ENCODE measurements at regions of chr12 and their contacts with region 1.

Region 1: GRCh38 chr12:113086249-113087164 is 30.0 kb downstream of the DTX1 start:
- DNase-seq: peak; percentile 42
- ATAC-seq: no peak
- H3K4me3 Mint-ChIP-seq: peak overlapping the region; percentile 23
- H3K27ac Mint-ChIP-seq: peak overlapping the region; percentile 85
- H3K4me1 Mint-ChIP-seq: peaks cover 73% of the 10 kb centered on the region
- H3K27me3 Mint-ChIP-seq: no peaks in the 10 kb centered on the region

Region 2: DNA sequence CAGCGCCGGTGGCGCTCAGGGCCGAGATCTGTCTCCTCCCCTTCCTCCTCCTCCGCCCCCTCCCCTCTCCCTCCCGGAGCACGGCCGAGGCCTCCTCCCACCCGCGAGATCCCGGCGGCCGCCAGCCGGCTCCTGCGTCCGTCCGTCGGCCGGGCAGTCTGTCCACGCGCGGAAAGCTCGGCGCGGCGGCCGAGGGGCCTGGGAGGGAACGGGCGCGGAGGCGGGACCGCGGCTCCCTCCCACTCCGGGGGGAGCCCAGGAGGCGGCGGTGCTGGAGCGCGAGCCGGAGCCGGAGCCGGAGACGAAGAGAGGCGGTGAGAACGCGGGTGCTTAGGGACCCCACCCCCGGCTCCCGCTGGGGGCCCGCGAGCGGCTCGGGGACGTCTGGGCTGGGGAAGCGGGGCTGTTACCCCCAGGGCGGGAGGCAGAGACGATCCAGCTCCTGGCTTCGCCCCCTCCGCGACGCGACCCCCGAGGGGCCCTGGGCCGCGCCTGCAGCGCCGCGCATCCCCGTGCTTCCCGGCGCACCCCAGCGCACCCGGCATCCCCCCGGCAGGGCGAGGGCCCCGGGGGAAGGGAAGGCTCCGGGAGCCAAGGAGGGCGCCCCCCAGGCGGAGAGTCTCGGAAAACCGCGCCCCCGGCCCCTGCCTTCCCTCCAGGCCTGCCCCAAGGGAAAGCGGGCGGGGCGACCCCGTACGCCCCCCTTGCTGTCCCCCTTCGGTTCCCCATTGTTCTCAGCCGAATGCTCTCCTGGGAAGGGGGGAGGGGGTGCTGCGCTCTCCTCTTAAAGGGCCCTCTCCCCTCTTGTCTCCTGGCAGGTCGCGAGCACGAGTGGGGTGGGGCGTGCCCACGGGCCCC is 29.6 kb before region 1 on chr12 and contains the start of gene DTX1:
- CTCF ChIA-PET with region 1: interaction called, 3 read pairs
- POLR2A ChIA-PET with region 1: no interaction called
- intact Hi-C with region 1: loop called (anchors 2 kb)
- DNase-seq: peak; percentile 63
- ATAC-seq: peak; percentile 57
- H3K4me3 Mint-ChIP-seq: peak within 1 kb of the TSS; percentile 74
- H3K27ac Mint-ChIP-seq: peak within 1 kb of the TSS; percentile 74
- H3K4me1 Mint-ChIP-seq: peaks cover 35% of the 10 kb centered on the region
- H3K27me3 Mint-ChIP-seq: no peaks in the 10 kb centered on the region
- total RNA-seq, gene DTX1: 12.0 to 12.9 TPM

Region 3: DNA sequence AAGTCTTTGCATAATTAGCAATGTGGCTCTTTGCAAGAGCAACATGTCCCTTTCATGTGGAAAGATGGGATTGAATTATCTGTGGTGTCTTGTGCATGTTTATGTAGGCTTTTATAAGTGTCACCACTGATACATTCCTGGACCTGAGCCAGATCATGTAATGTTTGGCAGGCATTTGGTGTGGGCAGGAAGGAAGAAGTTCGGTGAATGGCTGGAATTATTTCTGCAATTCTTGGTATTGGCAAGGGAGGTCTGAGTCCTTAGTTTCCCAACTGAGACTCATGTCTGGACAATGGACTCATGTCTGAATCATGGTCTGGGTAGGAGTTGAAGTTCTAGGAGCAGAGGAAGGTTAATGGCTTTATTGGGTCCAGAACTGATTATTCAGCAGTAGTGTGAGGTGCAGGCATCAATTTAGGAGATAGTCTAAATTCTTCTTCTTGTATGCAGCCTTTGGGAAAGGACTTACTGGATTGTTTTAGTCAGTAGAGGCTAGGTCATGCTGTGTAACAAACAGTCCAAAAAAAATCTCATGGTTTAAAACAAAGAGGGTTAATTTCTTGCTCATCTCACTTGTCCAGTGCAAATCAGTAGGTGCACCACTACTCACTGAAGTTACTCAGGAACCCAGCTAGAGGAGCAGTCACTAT is 571.6 kb after region 1 on chr12:
- CTCF ChIA-PET with region 1: no interaction called
- POLR2A ChIA-PET with region 1: no interaction called
- intact Hi-C with region 1: no loop called
- DNase-seq: no peak
- ATAC-seq: no peak
- H3K4me3 Mint-ChIP-seq: no peak overlapping the region
- H3K27ac Mint-ChIP-seq: no peak overlapping the region
- H3K4me1 Mint-ChIP-seq: no peaks in the 10 kb centered on the region
- H3K27me3 Mint-ChIP-seq: peaks cover 3% of the 10 kb centered on the region

Region 4: GRCh38 chr12:114063435-114063834 is 976.9 kb after region 1 on chr12:
- CTCF ChIA-PET with region 1: no interaction called
- POLR2A ChIA-PET with region 1: no interaction called
- intact Hi-C with region 1: no loop called
- DNase-seq: no peak
- ATAC-seq: no peak
- H3K4me3 Mint-ChIP-seq: no peak overlapping the region
- H3K27ac Mint-ChIP-seq: no peak overlapping the region
- H3K4me1 Mint-ChIP-seq: no peaks in the 10 kb centered on the region
- H3K27me3 Mint-ChIP-seq: peaks cover 7% of the 10 kb centered on the region